Sigmoid colon (tissue), 7 donors: ENCODE measurements at regions of chr19 and their contacts with region 1.

Region 1: DNA sequence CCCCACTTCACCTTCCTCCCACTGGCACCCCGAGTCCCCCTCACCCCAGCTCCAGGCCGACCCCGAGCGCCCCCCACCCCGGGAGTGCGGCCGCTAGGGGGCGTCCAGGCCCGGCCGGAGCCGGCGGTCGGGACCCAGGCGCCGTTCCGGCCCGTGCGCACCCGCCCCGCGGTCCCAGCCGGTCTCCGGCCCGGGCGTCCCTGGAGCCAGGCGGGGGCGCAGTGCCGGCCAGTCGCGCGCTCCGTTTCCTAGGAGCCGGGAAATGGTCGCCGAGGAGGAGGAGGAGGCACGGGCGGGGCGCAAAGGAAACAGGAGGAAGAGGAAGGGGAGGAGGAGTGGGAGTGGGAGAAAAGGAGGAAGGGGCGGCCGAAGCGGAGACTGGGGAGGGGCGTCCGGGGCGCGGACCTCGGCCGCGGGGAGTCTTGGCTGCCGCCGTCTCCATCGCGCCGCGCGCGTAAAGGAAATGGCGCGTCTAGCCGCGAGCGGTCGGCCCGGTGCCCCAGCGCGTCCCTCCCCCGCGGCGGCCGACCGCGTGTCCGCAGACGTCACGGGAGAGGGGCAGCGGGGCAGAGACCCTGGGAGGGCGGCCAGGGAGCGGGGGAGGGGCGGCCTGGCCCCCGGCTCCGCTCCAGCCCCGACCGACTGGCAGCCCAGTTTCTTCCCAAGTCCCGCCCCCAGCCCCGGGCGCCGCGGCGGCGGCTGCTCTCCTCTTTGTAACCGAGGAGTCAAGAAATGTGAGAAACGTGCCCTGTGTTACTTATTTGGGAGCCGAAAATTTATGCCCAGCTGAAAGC is 1.1 kb upstream of the KCTD15 start:
- DNase-seq: peak; percentile 88
- H3K4me3 ChIP-seq: peak overlapping the region; percentile 55 to 95 (median 89)
- H3K27ac ChIP-seq: peak overlapping the region; percentile 94 to 97 (median 96)
- H3K4me1 ChIP-seq: peaks cover 0 to 30% (median 25%) of the 10 kb centered on the region in 4 donors
- H3K27me3 ChIP-seq: no peaks in the 10 kb centered on the region
- CTCF ChIP-seq: peak in 3 of 4 experiments; percentile 65 to 87 (median 68)
- EP300 ChIP-seq: no peak
- POLR2A ChIP-seq: peak in 1 of 2 donors; percentile 21

Region 2: DNA sequence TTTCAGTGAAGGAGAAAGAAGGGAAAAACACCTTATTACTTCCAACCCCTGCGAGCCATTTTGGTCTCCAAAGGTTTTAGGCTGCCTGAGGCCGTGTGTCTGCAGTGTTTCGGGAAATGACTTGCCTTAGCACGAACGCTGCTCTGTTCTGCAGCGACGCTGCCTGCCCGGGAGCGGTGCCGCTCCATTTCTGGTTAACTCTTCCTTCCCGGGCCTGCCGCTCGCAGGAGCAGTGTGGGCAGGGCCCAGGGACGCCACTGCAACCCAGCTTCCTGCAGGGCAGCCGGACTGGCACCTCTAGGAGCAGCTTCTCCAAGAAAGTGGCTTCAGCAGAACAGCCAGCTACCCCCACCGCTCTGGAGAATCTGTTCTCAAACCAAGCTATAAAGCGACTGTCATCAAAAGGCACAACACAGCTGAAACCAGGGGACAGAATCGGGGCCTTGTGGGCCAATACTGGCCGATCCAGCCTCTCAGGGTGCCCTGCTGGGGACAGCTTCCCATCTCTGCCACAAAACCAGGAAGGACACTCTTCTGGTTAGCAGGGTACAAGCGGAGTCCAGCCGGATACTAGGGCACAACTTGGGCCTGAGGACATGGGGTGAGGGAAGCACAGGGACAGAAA is 73.3 kb after region 1 on chr19:
- intact Hi-C with region 1: loop called (anchors 2 kb)
- DNase-seq: peak; percentile 77
- H3K4me3 ChIP-seq: peak overlapping the region in 3 of 4 donors; percentile 28 to 43 (median 28)
- H3K27ac ChIP-seq: peak overlapping the region in 3 of 4 donors; percentile 13 to 73 (median 69)
- H3K4me1 ChIP-seq: peaks cover 0 to 21% (median 21%) of the 10 kb centered on the region in 4 donors
- H3K27me3 ChIP-seq: no peaks in the 10 kb centered on the region
- CTCF ChIP-seq: no peak
- EP300 ChIP-seq: no peak
- POLR2A ChIP-seq: no peak

Region 3: GRCh38 chr19:34145741-34146202 is 350.2 kb after region 1 on chr19:
- intact Hi-C with region 1: loop called (anchors 5 kb)
- DNase-seq: no peak
- H3K4me3 ChIP-seq: no peak overlapping the region
- H3K27ac ChIP-seq: no peak overlapping the region
- H3K4me1 ChIP-seq: no peaks in the 10 kb centered on the region
- H3K27me3 ChIP-seq: no peaks in the 10 kb centered on the region
- CTCF ChIP-seq: peak; percentile 65 to 85 (median 70)
- EP300 ChIP-seq: no peak
- POLR2A ChIP-seq: no peak